ENCODE measurements at regions of chr1 and their contacts with region 1.

Region 1: DNA sequence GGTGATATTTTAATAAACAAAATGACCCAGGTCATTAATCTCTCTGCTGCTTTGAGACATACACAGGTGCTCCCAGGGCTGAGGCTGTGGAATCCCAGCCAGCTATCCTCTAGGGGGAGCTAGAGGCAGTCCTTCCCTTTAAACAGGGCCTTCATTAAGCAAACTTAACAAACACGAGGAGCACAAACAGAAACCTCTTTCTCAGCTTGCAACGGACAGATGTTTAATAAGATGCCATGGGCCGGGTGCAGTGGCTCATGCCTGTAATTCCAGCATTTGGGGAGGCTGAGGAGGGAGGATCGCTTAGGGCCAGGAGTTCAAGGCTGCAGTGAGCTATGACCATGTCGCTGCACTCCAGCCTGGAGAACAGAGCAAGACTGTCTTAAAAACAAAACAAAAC is 106.7 kb downstream of the HIVEP3 start:
- DNase-seq: peak in 2 of 5 donors; percentile 38 to 57
- ATAC-seq: peak in 1 of 4 donors; percentile 30
- H3K4me3 ChIP-seq: no peak overlapping the region
- H3K27ac ChIP-seq: peak overlapping the region in 10 of 12 donors; percentile 4 to 87 (median 38)
- H3K4me1 ChIP-seq: peaks cover 5 to 58% (median 25%) of the 10 kb centered on the region in 12 donors
- H3K27me3 ChIP-seq: no peaks in the 10 kb centered on the region
- CTCF ChIP-seq: peak; percentile 46 to 75 (median 62)
- POLR2A ChIP-seq: no peak

Region 2: GRCh38 chr1:41739061-41739955 is 72.7 kb before region 1 on chr1:
- intact Hi-C with region 1: no loop called
- DNase-seq: peak; percentile 79 to 91 (median 80)
- ATAC-seq: peak; percentile 43 to 80 (median 67)
- H3K4me3 ChIP-seq: peak overlapping the region in 5 of 12 donors; percentile 9 to 24 (median 17)
- H3K27ac ChIP-seq: peak overlapping the region in 4 of 12 donors; percentile 32 to 90 (median 47)
- H3K4me1 ChIP-seq: peaks cover 0 to 82% (median 16%) of the 10 kb centered on the region in 12 donors
- H3K27me3 ChIP-seq: no peaks in the 10 kb centered on the region
- CTCF ChIP-seq: no peak
- POLR2A ChIP-seq: no peak

Region 3: GRCh38 chr1:41856944-41857285 is 44.9 kb after region 1 on chr1:
- intact Hi-C with region 1: no loop called
- DNase-seq: no peak
- ATAC-seq: peak in 1 of 4 donors; percentile 49
- H3K4me3 ChIP-seq: no peak overlapping the region
- H3K27ac ChIP-seq: no peak overlapping the region
- H3K4me1 ChIP-seq: peaks cover 0 to 38% (median 7%) of the 10 kb centered on the region in 12 donors
- H3K27me3 ChIP-seq: no peaks in the 10 kb centered on the region
- CTCF ChIP-seq: no peak
- POLR2A ChIP-seq: no peak

Region 4: DNA sequence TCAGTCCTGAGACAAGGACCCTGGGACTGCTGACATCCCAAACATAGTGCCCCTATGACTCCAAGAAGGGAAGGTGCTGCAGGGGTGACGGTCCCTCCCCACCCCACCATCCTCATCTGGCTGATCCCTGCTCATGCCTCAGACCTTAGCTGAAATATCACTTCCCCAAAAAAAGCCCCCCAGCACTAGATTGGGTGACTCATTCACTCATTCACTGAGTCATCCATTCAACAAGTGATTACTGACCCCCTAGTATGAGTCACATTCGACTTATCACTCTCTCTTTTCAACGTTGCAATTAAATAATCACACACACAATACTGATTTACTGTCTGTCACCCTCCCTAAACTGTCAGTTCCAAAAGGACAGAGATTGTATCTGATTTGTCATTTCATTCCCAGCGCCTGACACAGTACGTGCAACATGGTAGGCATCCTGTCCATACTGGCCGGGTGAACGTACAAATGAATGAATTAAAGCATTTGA is 58.1 kb after region 1 on chr1:
- intact Hi-C with region 1: loop called in 1 of 10 experiments (anchors 5 kb)
- DNase-seq: no peak
- ATAC-seq: no peak
- H3K4me3 ChIP-seq: no peak overlapping the region
- H3K27ac ChIP-seq: no peak overlapping the region
- H3K4me1 ChIP-seq: peaks cover 0 to 24% (median 11%) of the 10 kb centered on the region in 12 donors
- H3K27me3 ChIP-seq: no peaks in the 10 kb centered on the region
- CTCF ChIP-seq: no peak
- POLR2A ChIP-seq: no peak

Region 5: GRCh38 chr1:41891199-41891896 is 79.3 kb after region 1 on chr1:
- intact Hi-C with region 1: loop called in 1 of 10 experiments (anchors 5 kb)
- DNase-seq: peak in 2 of 5 donors; percentile 36 to 48
- ATAC-seq: peak; percentile 36 to 68 (median 58)
- H3K4me3 ChIP-seq: peak overlapping the region in 11 of 12 donors; percentile 9 to 57 (median 40)
- H3K27ac ChIP-seq: peak overlapping the region; percentile 37 to 82 (median 76)
- H3K4me1 ChIP-seq: peaks cover 0 to 37% (median 19%) of the 10 kb centered on the region in 12 donors
- H3K27me3 ChIP-seq: no peaks in the 10 kb centered on the region
- CTCF ChIP-seq: peak in 3 of 12 donors; percentile 12 to 20 (median 16)
- POLR2A ChIP-seq: no peak

Region 6: GRCh38 chr1:41919764-41920397 is 107.8 kb after region 1 on chr1:
- intact Hi-C with region 1: loop called in 2 of 10 experiments (anchors 2 to 5 kb)
- DNase-seq: peak; percentile 40 to 85 (median 62)
- ATAC-seq: peak; percentile 71 to 87 (median 84)
- H3K4me3 ChIP-seq: peak overlapping the region in 9 of 12 donors; percentile 24 to 48 (median 31)
- H3K27ac ChIP-seq: peak overlapping the region in 5 of 12 donors; percentile 25 to 40 (median 36)
- H3K4me1 ChIP-seq: peaks cover 3 to 48% (median 29%) of the 10 kb centered on the region in 12 donors
- H3K27me3 ChIP-seq: peaks cover 0 to 15% (median 0%) of the 10 kb centered on the region in 9 donors
- CTCF ChIP-seq: no peak
- POLR2A ChIP-seq: peak in 1 of 2 donors; percentile 19

Region 7: DNA sequence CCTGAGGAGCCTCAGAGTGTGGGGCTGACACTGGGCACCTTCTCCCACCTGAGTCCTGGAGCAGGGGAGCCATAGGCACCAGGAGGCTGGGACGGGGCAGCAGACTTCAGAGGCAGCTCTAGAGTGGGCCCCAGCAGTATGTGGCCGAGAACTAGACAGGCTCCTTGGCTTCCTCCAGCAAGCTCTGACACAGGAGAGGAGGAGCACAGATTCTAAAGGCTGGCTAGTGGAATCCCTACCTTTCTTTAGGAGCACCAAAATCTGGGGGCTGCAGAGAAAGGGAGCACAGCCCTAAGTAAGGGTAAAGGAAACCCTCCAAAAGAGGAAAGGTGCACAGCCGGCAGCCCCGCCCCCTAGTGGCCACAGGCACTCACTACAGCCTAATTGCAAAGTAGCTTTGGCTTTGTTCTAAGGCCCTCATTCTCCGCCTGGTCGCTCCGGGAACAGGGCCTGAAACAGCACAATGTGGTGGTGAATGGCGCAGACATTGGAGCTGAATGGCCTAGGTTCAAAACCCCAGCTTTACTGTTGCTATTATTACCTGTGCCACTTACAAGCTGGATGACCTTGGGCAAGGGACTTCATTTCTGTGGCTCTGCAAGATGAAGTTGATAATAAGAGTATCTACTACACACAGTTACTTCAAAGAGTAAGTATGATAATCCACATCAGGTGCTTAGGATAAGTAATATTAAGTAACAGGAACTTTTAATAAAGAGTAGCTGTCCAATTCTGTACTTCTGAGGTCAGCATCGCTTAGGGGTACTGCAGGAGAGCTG is 361.3 kb after region 1 on chr1:
- intact Hi-C with region 1: loop called in 4 of 10 experiments (anchors 2 to 10 kb)
- DNase-seq: peak; percentile 58 to 80 (median 70)
- ATAC-seq: peak; percentile 42 to 63 (median 54)
- H3K4me3 ChIP-seq: no peak overlapping the region
- H3K27ac ChIP-seq: peak overlapping the region; percentile 63 to 95 (median 86)
- H3K4me1 ChIP-seq: peaks cover 8 to 48% (median 37%) of the 10 kb centered on the region in 12 donors
- H3K27me3 ChIP-seq: no peaks in the 10 kb centered on the region
- CTCF ChIP-seq: peak; percentile 91 to 99 (median 98)
- POLR2A ChIP-seq: no peak